Activated CD4-positive, alpha-beta memory T cell treated with anti-CD3 and anti-CD28 coated beads, Interleukin-2, amount 10 ng/mL, durations not matched to agents 7 days and 5 days (primary cell): ENCODE measurements at regions of chr1 and their contacts with region 1.

Region 1: DNA sequence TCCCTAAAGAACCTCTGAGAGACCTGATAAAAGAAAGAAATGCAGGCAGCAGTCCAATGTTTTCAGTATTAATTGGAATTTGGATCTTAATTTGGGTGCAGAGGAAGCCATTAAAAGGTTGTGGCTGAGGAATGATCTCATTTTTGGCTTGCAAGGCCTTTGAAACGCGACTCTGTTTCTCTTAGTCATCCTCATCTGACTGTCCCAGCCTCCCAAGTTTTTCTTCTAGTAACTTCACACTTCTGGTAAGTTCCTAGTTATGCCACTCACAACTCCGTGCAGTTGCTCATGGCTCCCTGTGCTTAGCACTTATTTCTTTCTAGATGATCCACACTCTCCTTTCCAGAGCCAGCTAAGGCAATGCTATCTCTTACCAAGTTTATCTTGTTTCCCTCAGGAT is 147.4 kb upstream of the USP24 start:
- DNase-seq: no peak
- H3K4me3 Mint-ChIP-seq: no peak overlapping the region
- H3K27ac Mint-ChIP-seq: no peak overlapping the region
- H3K4me1 Mint-ChIP-seq: peaks cover 19% of the 10 kb centered on the region
- H3K27me3 Mint-ChIP-seq: peaks cover 4% of the 10 kb centered on the region

Region 2: DNA sequence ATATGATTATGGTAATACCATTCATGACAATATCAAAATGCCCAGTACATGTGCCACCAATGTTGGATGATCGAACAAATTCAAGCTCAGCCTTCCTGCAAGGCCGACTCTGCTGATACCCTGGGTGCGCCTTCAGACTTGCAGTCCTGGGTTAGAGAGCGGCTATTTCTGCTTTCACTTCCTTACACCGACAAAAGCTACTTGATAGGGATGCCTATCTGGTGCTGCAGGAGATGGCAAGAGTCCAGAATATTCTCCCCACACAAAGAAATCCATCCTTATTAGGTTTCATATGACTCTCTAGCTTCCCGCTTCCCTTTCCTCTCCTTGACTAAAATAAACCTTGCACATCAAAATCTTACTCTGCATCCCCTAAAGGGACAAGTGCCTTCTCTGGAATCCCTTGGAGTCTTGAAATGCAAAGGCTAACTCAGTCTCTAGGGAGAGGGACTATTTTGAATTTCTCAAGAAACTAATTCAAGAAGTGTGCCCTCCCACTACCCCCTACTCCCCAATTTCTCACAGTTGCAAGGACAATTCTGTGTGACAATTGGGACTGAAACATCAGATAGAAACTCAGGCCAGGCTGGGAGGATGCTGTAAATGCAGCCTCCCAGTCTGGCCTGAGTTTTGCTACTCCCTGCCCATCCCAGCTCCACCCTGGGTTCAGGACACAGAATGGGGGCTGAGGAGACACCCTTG is 44.3 kb before region 1 on chr1:
- CTCF ChIA-PET with region 1: no interaction called
- POLR2A ChIA-PET with region 1: no interaction called
- DNase-seq: no peak
- H3K4me3 Mint-ChIP-seq: no peak overlapping the region
- H3K27ac Mint-ChIP-seq: no peak overlapping the region
- H3K4me1 Mint-ChIP-seq: no peaks in the 10 kb centered on the region
- H3K27me3 Mint-ChIP-seq: peaks cover 5% of the 10 kb centered on the region

Region 3: GRCh38 chr1:55347866-55348265 is 14.7 kb before region 1 on chr1:
- CTCF ChIA-PET with region 1: no interaction called
- POLR2A ChIA-PET with region 1: no interaction called
- DNase-seq: no peak
- H3K4me3 Mint-ChIP-seq: no peak overlapping the region
- H3K27ac Mint-ChIP-seq: no peak overlapping the region
- H3K4me1 Mint-ChIP-seq: no peaks in the 10 kb centered on the region
- H3K27me3 Mint-ChIP-seq: peaks cover 18% of the 10 kb centered on the region

Region 4: GRCh38 chr1:55375617-55376258 is 13.2 kb after region 1 on chr1:
- CTCF ChIA-PET with region 1: interaction called, 20 read pairs
- POLR2A ChIA-PET with region 1: interaction called, 4 read pairs
- DNase-seq: peak; percentile 31
- H3K4me3 Mint-ChIP-seq: no peak overlapping the region
- H3K27ac Mint-ChIP-seq: no peak overlapping the region
- H3K4me1 Mint-ChIP-seq: peaks cover 5% of the 10 kb centered on the region
- H3K27me3 Mint-ChIP-seq: no peaks in the 10 kb centered on the region